Aorta (tissue), 5 donors: ENCODE measurements at regions of chr20 and their contacts with region 1.

Region 1: GRCh38 chr20:61065853-61066252 is 186.2 kb upstream of the CDH4 start:
- DNase-seq: no peak
- ATAC-seq: no peak
- H3K4me3 ChIP-seq: no peak overlapping the region
- H3K27ac ChIP-seq: no peak overlapping the region
- H3K4me1 ChIP-seq: no peaks in the 10 kb centered on the region
- H3K27me3 ChIP-seq: no peaks in the 10 kb centered on the region

Region 2: DNA sequence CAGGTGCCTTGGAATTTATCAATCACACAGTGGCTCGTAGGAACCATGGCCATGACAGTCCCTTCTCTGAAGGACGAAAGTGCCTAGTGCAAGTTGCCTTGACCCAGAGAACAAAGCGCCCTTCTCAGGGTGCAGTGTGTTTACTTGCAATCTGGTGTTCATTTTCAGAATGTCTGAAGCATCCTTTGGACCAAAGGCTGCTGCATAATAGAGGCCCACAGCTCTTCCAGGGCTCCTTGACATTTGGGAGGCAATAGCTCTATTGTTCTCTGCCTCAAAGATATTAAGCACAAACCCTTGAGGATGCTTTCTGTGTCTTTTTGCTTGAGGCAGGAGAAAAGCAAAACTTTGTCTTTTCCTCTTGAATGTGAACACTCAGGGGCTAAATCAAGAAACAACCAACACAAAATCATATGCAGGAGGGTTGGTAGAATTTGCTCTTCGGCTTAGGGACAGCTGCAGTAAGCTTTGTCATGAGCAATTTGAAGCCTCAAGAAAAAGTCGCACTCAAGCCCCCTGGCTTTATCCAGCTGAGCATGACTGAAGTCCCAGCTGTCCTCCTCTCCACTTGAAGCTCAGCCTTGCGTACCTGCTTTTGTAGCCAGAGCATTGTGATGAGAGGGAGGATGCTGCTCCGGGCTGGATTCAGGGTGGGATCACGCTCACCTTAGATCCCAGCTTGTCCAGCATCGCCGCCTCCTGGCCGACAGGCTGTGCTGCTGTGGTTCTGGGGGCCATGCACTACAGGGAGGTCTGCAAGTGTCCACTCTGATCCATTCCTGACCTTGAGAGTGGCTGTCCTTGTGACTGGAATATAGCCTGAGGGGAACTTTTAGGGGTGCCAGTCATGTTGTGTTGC is 612.2 kb before region 1 on chr20:
- intact Hi-C with region 1: no loop called
- DNase-seq: no peak
- ATAC-seq: no peak
- H3K4me3 ChIP-seq: no peak overlapping the region
- H3K27ac ChIP-seq: no peak overlapping the region
- H3K4me1 ChIP-seq: no peaks in the 10 kb centered on the region
- H3K27me3 ChIP-seq: no peaks in the 10 kb centered on the region

Region 3: GRCh38 chr20:61030130-61030529 is 35.7 kb before region 1 on chr20:
- intact Hi-C with region 1: no loop called
- DNase-seq: no peak
- ATAC-seq: no peak
- H3K4me3 ChIP-seq: no peak overlapping the region
- H3K27ac ChIP-seq: no peak overlapping the region
- H3K4me1 ChIP-seq: no peaks in the 10 kb centered on the region
- H3K27me3 ChIP-seq: no peaks in the 10 kb centered on the region

Region 4: GRCh38 chr20:61120595-61121515 is 55.0 kb after region 1 on chr20:
- intact Hi-C with region 1: loop called in 1 of 2 experiments (anchors 10 kb)
- DNase-seq: peak in 1 of 2 donors; percentile 57
- ATAC-seq: no peak
- H3K4me3 ChIP-seq: no peak overlapping the region
- H3K27ac ChIP-seq: no peak overlapping the region
- H3K4me1 ChIP-seq: no peaks in the 10 kb centered on the region
- H3K27me3 ChIP-seq: no peaks in the 10 kb centered on the region